ENCODE measurements at regions of chr19 and their contacts with region 1.

Region 1: DNA sequence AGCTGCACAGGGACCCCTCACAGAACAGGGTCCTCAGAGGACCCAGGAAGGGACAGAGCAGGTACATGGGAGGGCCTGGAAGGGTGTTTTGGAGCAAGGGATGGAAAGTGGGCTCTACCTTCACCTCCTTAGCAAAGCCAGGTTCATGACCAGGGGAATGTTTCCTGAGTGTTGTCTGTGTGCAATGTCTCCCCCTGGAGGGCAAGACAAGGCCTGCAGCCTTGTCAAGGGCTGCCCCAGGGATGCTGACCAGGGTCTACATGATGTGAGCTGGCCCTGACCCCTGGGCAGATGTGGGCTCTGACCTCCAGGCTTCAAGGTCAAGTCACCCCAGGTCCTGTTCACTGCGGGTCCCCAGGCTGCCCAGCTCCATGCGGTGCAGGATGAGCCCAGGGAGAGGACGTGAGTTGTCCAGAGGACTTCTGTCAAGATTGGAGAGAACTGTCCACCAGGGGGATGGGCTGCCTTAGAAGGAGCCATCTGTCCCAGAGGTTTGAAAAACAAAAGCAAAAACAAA is 1.0 kb upstream of the CEACAM1 start:
- DNase-seq: peak; percentile 82
- H3K4me3 Mint-ChIP-seq: peak overlapping the region; percentile 72
- H3K27ac Mint-ChIP-seq: peak overlapping the region; percentile 66
- H3K4me1 Mint-ChIP-seq: peaks cover 33% of the 10 kb centered on the region
- H3K27me3 Mint-ChIP-seq: no peaks in the 10 kb centered on the region

Region 2: DNA sequence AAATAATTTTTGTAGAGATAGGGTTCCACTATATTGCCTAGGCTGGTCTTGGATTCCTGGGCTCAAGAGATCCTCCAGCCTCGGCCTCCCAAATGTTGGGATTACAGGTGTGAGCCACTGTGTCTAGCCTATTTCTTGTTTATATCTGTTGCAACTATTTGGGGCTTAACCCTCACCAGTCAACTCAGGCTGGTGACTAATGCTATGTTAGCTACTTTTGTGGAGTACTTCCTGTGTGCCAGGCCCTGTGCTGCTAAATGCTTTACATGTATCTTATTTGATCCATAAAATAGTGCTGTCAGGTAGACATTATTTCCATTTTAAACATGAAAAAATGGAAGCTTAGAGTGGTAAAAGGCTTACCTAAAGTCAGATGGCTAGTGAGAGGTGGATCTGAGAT is 14.9 kb before region 1 on chr19:
- CTCF ChIA-PET with region 1: interaction called, 14 read pairs
- POLR2A ChIA-PET with region 1: interaction called, 3 read pairs
- intact Hi-C with region 1: loop called (anchors 2 kb)
- DNase-seq: peak; percentile 23
- H3K4me3 Mint-ChIP-seq: no peak overlapping the region
- H3K27ac Mint-ChIP-seq: no peak overlapping the region
- H3K4me1 Mint-ChIP-seq: peaks cover 31% of the 10 kb centered on the region
- H3K27me3 Mint-ChIP-seq: no peaks in the 10 kb centered on the region